ENCODE measurements at regions of chr15 and their contacts with region 1.

Region 1: GRCh38 chr15:40590667-40591050 is 3.4 kb upstream of the KNL1 start:
- DNase-seq: no peak
- H3K4me3 Mint-ChIP-seq: peak overlapping the region; percentile 63
- H3K27ac Mint-ChIP-seq: no peak overlapping the region
- H3K4me1 Mint-ChIP-seq: peaks cover 30% of the 10 kb centered on the region
- H3K27me3 Mint-ChIP-seq: peaks cover 21% of the 10 kb centered on the region

Region 2: GRCh38 chr15:40029979-40030893 is 560.4 kb before region 1 on chr15:
- CTCF ChIA-PET with region 1: no interaction called
- DNase-seq: peak; percentile 49
- H3K4me3 Mint-ChIP-seq: no peak overlapping the region
- H3K27ac Mint-ChIP-seq: no peak overlapping the region
- H3K4me1 Mint-ChIP-seq: peaks cover 3% of the 10 kb centered on the region
- H3K27me3 Mint-ChIP-seq: no peaks in the 10 kb centered on the region

Region 3: GRCh38 chr15:40569139-40569953 is 21.3 kb before region 1 on chr15 and contains the start of gene RPUSD2:
- CTCF ChIA-PET with region 1: interaction called, 11 read pairs
- DNase-seq: peak; percentile 96
- H3K4me3 Mint-ChIP-seq: peak within 1 kb of the TSS; percentile 95
- H3K27ac Mint-ChIP-seq: peak within 1 kb of the TSS; percentile 97
- H3K4me1 Mint-ChIP-seq: peaks cover 49% of the 10 kb centered on the region
- H3K27me3 Mint-ChIP-seq: peaks cover 18% of the 10 kb centered on the region